ENCODE measurements at regions of chr3 and their contacts with region 1.

Region 1: GRCh38 chr3:196609343-196609775 is 30.1 kb upstream of the NRROS start:
- DNase-seq: peak; percentile 95
- H3K4me3 ChIP-seq: no peak overlapping the region
- H3K27ac ChIP-seq: peak overlapping the region in 3 of 4 donors; percentile 26 to 48 (median 27)
- H3K4me1 ChIP-seq: peaks cover 0 to 27% (median 6%) of the 10 kb centered on the region in 4 donors
- H3K27me3 ChIP-seq: peaks cover 6% of the 10 kb centered on the region
- CTCF ChIP-seq: peak; percentile 90 to 92 (median 91)
- EP300 ChIP-seq: no peak
- POLR2A ChIP-seq: no peak

Region 2: GRCh38 chr3:196684548-196685407 is 75.4 kb after region 1 on chr3:
- in situ Hi-C with region 1: loop called (anchors 5 to 10 kb)
- intact Hi-C with region 1: loop called (anchors 1 kb)
- DNase-seq: peak; percentile 71
- H3K4me3 ChIP-seq: no peak overlapping the region
- H3K27ac ChIP-seq: no peak overlapping the region
- H3K4me1 ChIP-seq: peaks cover 0 to 9% (median 2%) of the 10 kb centered on the region in 4 donors
- H3K27me3 ChIP-seq: no peaks in the 10 kb centered on the region
- CTCF ChIP-seq: peak; percentile 88 to 94 (median 91)
- EP300 ChIP-seq: no peak
- POLR2A ChIP-seq: no peak

Measured in transverse colon (tissue), 4 donors.